Sciatic nerve (tissue), 2 donors: ENCODE measurements at regions of chr4 and their contacts with region 1.

Region 1: GRCh38 chr4:2135083-2135482 is 76.0 kb downstream of the NAT8L start:
- DNase-seq: no peak
- ATAC-seq: no peak

Region 2: DNA sequence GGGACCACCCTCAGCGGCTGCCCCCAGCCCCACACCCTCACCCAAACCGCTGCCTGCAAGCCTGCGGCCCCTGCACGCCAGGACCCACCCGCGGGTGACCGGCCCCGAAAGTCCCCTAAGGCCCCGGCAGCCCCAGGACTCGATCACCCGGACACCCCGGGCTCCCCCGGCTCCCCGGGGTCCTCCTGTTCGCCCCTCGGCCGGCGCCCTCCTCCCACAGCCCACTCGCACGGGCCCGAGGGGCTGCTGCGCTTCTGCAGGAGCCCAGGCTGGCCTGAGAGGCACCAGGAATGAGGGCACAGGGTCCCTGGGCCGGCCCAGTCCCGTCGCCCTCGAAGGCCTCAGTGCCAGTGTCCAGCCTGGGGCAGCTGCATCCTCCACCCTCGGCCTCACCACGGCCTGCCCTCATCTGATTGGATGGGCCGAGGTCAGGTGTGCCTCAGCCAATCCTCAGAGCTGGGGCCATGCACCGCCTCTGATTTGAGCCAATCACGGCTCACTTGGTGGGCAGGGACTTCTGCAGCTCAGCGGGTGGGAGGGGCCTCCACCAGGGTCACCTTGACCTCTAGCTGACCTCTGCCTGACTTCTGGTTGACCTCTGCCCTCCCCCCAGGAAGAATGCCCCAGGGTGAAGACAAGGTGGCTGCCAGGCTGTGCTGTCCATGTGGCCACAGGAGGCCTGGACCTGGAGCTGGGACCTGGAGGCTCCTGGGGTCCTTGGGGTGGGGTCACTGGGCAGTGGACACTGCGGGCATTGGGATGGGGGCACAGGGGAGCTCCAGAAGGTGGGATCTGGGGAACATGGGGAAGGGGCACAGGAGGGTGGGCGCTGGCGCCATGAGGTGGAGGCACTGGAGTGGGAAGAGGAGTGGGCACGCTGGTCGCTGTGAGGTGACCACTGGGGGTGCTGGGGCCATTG is 631.2 kb before region 1 on chr4:
- intact Hi-C with region 1: loop called (anchors 5 kb)
- DNase-seq: peak; percentile 45
- ATAC-seq: no peak

Region 3: DNA sequence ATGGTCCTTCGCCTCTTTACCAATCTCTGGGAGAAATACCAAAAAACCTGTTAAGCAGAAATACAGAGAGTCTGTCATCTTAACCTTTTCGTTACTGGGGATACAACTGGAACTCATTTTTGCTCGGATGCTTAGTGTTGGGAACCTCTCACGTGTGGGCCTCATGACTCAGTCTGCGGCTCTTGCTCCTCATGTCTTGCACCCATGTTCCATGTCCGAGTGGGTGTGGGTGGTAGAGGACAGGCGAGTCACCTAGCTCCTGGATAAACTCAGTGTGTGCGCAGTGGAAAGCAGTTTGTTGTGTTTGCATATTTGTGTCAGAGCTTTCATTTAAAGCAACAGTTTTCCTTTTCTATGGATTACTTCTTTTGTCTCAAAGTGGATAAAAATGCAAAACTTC is 550.5 kb after region 1 on chr4:
- intact Hi-C with region 1: no loop called
- DNase-seq: no peak
- ATAC-seq: no peak